Lower leg skin (tissue), 4 donors: ENCODE measurements at regions of chr10 and their contacts with region 1.

Region 1: DNA sequence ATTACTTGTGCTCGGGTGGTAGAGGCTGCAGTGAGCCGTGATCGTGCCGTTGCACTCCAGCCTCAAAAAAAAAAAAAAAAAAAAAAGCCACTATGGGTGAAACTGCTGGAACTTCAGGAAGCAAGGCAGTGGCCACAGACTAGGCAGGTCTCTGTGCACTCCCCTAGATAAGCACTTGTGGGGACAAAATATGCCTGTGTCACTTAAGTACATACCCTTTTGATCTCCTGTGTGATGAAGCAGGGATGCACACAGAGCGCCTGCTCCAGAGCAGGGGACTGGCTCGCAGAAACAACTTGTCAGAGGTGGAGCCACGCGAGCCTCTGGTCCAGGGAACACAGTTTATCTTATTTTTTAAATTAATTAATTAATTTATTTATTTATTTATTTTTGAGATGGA is 42.9 kb upstream of the PSAP start:
- DNase-seq: no peak
- H3K4me3 ChIP-seq: no peak overlapping the region
- CTCF ChIP-seq: no peak
- POLR2A ChIP-seq: no peak

Region 2: GRCh38 chr10:71840177-71840957 is 53.6 kb before region 1 on chr10:
- intact Hi-C with region 1: loop called (anchors 10 kb)
- DNase-seq: no peak
- H3K4me3 ChIP-seq: no peak overlapping the region
- CTCF ChIP-seq: no peak
- POLR2A ChIP-seq: no peak